CD4-positive, alpha-beta memory T cell (primary cell): ENCODE measurements at regions of chrX and their contacts with region 1.

Region 1: GRCh38 chrX:130060122-130061069 is 49.9 kb downstream of the ELF4 start:
- DNase-seq: peak; percentile 71 to 79 (median 72)
- H3K4me3 ChIP-seq: peak overlapping the region in 1 of 2 donors; percentile 28
- H3K4me3 Mint-ChIP-seq: peak overlapping the region; percentile 65 to 82 (median 75)
- H3K27ac ChIP-seq: peak overlapping the region; percentile 39
- H3K27ac Mint-ChIP-seq: peak overlapping the region in 5 of 7 donors; percentile 27 to 70 (median 55)
- H3K4me1 ChIP-seq: peaks cover 7% of the 10 kb centered on the region
- H3K4me1 Mint-ChIP-seq: peaks cover 3 to 17% (median 11%) of the 10 kb centered on the region in 4 donors
- H3K27me3 ChIP-seq: no peaks in the 10 kb centered on the region
- H3K27me3 Mint-ChIP-seq: no peaks in the 10 kb centered on the region

Region 2: GRCh38 chrX:129600981-129601424 is 459.4 kb before region 1 on chrX:
- CTCF ChIA-PET with region 1: interaction called, 16 read pairs
- POLR2A ChIA-PET with region 1: no interaction called
- intact Hi-C with region 1: loop called (anchors 1 kb)
- DNase-seq: peak in 3 of 5 donors; percentile 9 to 21 (median 17)
- H3K4me3 ChIP-seq: no peak overlapping the region
- H3K4me3 Mint-ChIP-seq: no peak overlapping the region
- H3K27ac ChIP-seq: no peak overlapping the region
- H3K27ac Mint-ChIP-seq: peak overlapping the region in 1 of 7 donors; percentile 0
- H3K4me1 ChIP-seq: peaks cover 12% of the 10 kb centered on the region
- H3K4me1 Mint-ChIP-seq: peaks cover 5 to 21% (median 15%) of the 10 kb centered on the region in 4 donors
- H3K27me3 ChIP-seq: no peaks in the 10 kb centered on the region
- H3K27me3 Mint-ChIP-seq: no peaks in the 10 kb centered on the region

Region 3: DNA sequence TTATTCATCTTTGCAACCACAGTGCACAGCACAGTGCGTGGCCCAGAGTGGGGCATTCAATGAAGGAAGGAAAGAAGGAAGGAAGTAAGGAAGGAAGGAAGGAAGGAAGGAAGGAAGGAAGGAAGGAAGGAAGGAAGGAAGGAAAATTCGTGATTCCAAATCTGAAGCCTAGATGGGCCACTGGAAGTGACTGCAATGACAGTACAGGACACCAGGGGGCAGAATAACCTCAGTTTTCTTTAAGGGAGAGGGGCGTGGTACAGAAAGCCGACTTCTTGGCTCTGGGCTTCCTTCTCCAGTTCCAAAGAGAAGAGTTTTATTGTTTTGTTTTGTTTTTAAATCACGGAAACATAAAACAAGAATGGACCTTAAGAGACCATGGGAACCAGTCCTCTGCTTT is 453.5 kb before region 1 on chrX:
- CTCF ChIA-PET with region 1: interaction called, 16 read pairs
- POLR2A ChIA-PET with region 1: no interaction called
- intact Hi-C with region 1: loop called (anchors 1 kb)
- DNase-seq: peak; percentile 48 to 65 (median 58)
- H3K4me3 ChIP-seq: no peak overlapping the region
- H3K4me3 Mint-ChIP-seq: peak overlapping the region in 1 of 8 donors; percentile 39
- H3K27ac ChIP-seq: no peak overlapping the region
- H3K27ac Mint-ChIP-seq: peak overlapping the region in 1 of 7 donors; percentile 50
- H3K4me1 ChIP-seq: peaks cover 12% of the 10 kb centered on the region
- H3K4me1 Mint-ChIP-seq: peaks cover 2 to 25% (median 18%) of the 10 kb centered on the region in 4 donors
- H3K27me3 ChIP-seq: no peaks in the 10 kb centered on the region
- H3K27me3 Mint-ChIP-seq: no peaks in the 10 kb centered on the region